Mucosa of descending colon (tissue), 3 donors: ENCODE measurements at regions of chr1 and their contacts with region 1.

Region 1: GRCh38 chr1:150578965-150579798 is at the start of gene MCL1:
- DNase-seq: peak; percentile 91 to 96 (median 92)
- ATAC-seq: peak; percentile 88
- H3K4me3 ChIP-seq: peak within 1 kb of the TSS; percentile 94
- H3K4me1 ChIP-seq: peaks cover 15% of the 10 kb centered on the region
- CTCF ChIP-seq: no peak
- total RNA-seq, gene MCL1: 221 to 258 (median 236) TPM

Region 2: GRCh38 chr1:150621497-150622302 is 42.5 kb after region 1 on chr1:
- intact Hi-C with region 1: loop called in 1 of 2 experiments (anchors 5 kb)
- DNase-seq: peak in 2 of 3 donors; percentile 47 to 75
- ATAC-seq: peak; percentile 56
- H3K4me3 ChIP-seq: no peak overlapping the region
- H3K4me1 ChIP-seq: peaks cover 20% of the 10 kb centered on the region
- CTCF ChIP-seq: peak; percentile 43